ENCODE measurements at regions of chr6 and their contacts with region 1.

Region 1: DNA sequence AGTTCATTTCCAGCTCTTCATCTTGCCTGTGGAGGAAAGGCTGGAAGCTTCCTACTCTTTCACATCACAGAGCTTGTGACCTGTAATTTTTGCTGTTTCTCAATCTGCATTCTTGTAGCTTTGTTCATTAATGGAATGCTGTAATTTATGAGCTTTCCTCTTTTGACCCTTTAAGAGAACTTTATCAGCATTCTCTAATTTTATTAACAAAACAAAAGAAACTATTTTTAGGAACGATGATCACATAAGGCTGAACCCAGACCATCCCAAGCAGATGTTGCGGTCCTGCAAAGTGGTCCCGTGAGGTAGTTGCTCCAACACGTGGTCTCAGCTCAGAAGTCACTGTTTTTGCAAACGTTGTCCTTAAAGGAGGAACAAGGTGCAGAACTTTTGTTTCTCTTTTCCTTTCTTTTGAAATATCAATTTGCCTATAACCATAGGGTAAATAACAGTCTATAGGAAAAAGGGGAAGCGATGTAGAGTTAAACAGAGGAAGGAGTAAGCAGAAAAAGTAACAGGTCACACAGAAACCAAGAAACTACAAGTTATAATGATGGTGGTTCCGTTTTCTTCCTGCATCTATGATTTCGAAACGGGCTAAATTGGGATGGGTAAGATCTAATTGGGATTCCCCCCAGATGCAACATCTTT is 121.3 kb upstream of the PHACTR1 start:
- DNase-seq: no peak
- H3K4me3 Mint-ChIP-seq: no peak overlapping the region
- H3K27ac Mint-ChIP-seq: peak overlapping the region; percentile 87
- H3K4me1 Mint-ChIP-seq: peaks cover 6% of the 10 kb centered on the region
- H3K27me3 Mint-ChIP-seq: no peaks in the 10 kb centered on the region
- CTCF ChIP-seq: no peak

Region 2: GRCh38 chr6:12504319-12504966 is 90.8 kb before region 1 on chr6:
- CTCF ChIA-PET with region 1: no interaction called
- intact Hi-C with region 1: loop called (anchors 5 kb)
- DNase-seq: peak; percentile 55
- H3K4me3 Mint-ChIP-seq: no peak overlapping the region
- H3K27ac Mint-ChIP-seq: no peak overlapping the region
- H3K4me1 Mint-ChIP-seq: no peaks in the 10 kb centered on the region
- H3K27me3 Mint-ChIP-seq: no peaks in the 10 kb centered on the region
- CTCF ChIP-seq: peak; percentile 48

Region 3: GRCh38 chr6:12545619-12546409 is 49.5 kb before region 1 on chr6:
- CTCF ChIA-PET with region 1: no interaction called
- intact Hi-C with region 1: loop called (anchors 2 kb)
- DNase-seq: peak; percentile 27
- H3K4me3 Mint-ChIP-seq: no peak overlapping the region
- H3K27ac Mint-ChIP-seq: peak overlapping the region; percentile 83
- H3K4me1 Mint-ChIP-seq: peaks cover 35% of the 10 kb centered on the region
- H3K27me3 Mint-ChIP-seq: no peaks in the 10 kb centered on the region
- CTCF ChIP-seq: no peak

Region 4: GRCh38 chr6:12572896-12573827 is 22.1 kb before region 1 on chr6:
- CTCF ChIA-PET with region 1: interaction called, 10 read pairs
- intact Hi-C with region 1: no loop called
- DNase-seq: peak; percentile 53
- H3K4me3 Mint-ChIP-seq: no peak overlapping the region
- H3K27ac Mint-ChIP-seq: peak overlapping the region; percentile 52
- H3K4me1 Mint-ChIP-seq: peaks cover 60% of the 10 kb centered on the region
- H3K27me3 Mint-ChIP-seq: no peaks in the 10 kb centered on the region
- CTCF ChIP-seq: no peak